ENCODE measurements at regions of chr19 and their contacts with region 1.

Region 1: GRCh38 chr19:43784981-43785808 is 4.4 kb upstream of the KCNN4 start:
- DNase-seq: peak in 1 of 2 donors; percentile 60
- H3K4me3 ChIP-seq: no peak overlapping the region
- CTCF ChIP-seq: peak in 2 of 3 donors; percentile 11 to 96
- POLR2A ChIP-seq: no peak

Region 2: GRCh38 chr19:43747557-43748204 is 37.5 kb before region 1 on chr19:
- intact Hi-C with region 1: loop called (anchors 5 kb)
- DNase-seq: peak in 1 of 2 donors; percentile 82
- H3K4me3 ChIP-seq: no peak overlapping the region
- CTCF ChIP-seq: no peak
- POLR2A ChIP-seq: no peak

Measured in lower leg skin (tissue), 4 donors.